ENCODE measurements at regions of chr14 and their contacts with region 1.

Region 1: GRCh38 chr14:75906676-75907280 is 75.0 kb downstream of the TGFB3 start:
- DNase-seq: peak; percentile 66
- H3K4me3 ChIP-seq: no peak overlapping the region
- H3K27ac ChIP-seq: no peak overlapping the region
- H3K4me1 ChIP-seq: peaks cover 3% of the 10 kb centered on the region
- H3K27me3 ChIP-seq: no peaks in the 10 kb centered on the region
- CTCF ChIP-seq: peak; percentile 67 to 73
- POLR2A ChIP-seq: no peak

Region 2: DNA sequence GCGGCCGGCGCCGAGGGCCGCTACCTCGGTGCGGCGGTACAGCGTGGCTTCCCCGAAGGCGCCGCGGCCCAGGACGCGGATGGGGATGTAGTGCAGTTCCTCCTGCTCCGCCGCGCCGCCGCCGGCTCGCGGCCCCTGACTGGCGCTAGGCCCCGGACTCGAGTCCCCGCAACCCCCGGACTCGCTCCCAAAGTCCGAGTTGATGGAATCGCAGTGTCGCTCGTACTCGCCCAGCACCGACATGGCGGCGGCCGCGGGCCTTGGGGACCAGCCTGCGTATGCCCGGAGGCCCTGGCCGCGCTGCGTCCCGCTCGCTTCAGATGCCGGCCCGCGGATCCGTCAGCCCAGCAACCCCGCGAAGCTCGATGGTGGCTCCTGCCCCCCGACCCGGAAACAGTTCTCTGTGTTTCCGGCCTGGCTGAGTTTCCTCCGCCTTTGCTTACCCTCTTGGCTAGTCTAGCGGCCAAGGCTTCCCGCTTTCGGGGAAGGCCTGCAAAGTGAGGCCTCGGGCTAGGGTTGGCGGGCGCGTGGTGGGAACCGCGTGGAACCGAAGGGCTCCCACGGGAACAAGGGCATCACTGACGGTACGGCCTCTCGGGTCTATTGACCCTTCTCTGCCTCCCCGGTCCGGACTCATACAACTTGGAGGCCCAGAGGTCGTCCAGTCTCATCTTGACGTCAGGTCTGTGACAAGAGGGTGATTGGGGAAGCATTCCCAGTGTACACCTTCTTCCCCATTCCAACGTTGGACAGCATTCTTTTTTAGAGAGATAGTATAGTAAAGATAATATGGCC is 779.9 kb before region 1 on chr14 and contains the start of gene NEK9:
- CTCF ChIA-PET with region 1: no interaction called
- POLR2A ChIA-PET with region 1: no interaction called
- dilution Hi-C with region 1: no loop called
- intact Hi-C with region 1: no loop called
- DNase-seq: peak; percentile 89
- H3K4me3 ChIP-seq: peak within 1 kb of the TSS; percentile 36 to 69 (median 62)
- H3K27ac ChIP-seq: peak within 1 kb of the TSS; percentile 95
- H3K4me1 ChIP-seq: peaks cover 45% of the 10 kb centered on the region
- H3K27me3 ChIP-seq: no peaks in the 10 kb centered on the region
- CTCF ChIP-seq: no peak
- POLR2A ChIP-seq: peak; percentile 93
- total RNA-seq, gene NEK9: 65.1 and 69.6 TPM in 2 replicates

Region 3: DNA sequence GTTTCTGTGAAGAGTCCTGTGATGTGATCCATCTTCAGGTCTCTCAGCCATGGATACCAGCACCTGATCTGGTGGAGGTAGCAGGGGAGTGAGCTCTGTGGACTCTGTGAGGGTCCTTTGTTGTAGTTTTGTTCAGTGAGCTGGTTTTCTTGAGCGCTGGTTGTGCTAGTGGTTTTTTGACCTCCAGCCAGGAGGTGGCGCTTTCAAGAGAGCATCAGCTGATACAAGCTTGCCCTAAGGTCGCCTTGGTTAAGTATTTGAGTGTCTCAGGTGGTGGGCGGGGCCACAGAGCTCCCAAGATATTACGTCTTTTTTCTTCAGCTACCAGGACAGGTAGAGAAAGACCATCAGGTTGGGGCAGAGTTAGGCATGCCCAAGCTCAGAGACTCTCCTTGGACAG is 106.0 kb before region 1 on chr14:
- CTCF ChIA-PET with region 1: interaction called, 52 read pairs
- POLR2A ChIA-PET with region 1: no interaction called
- dilution Hi-C with region 1: no loop called
- intact Hi-C with region 1: no loop called
- DNase-seq: no peak
- H3K4me3 ChIP-seq: no peak overlapping the region
- H3K27ac ChIP-seq: no peak overlapping the region
- H3K4me1 ChIP-seq: no peaks in the 10 kb centered on the region
- H3K27me3 ChIP-seq: no peaks in the 10 kb centered on the region
- CTCF ChIP-seq: no peak
- POLR2A ChIP-seq: no peak

Region 4: DNA sequence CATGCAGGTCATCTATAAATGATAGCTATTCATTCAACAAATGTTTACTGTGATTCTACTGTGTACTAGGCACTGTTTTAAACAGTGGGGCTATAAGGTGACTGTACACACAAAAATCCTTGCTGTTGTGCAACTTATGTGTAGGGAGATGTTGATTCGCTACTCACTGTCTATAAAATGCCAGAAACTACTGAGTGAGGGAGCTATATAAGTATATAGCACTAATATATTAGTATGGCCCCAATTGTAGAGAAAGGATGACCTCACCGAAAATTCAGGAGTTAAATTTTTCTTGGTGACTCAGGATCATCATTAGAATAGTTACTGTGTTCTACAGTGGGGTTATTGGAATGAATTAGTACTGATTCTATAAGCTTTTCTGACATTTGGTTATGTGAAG is 42.4 kb before region 1 on chr14:
- CTCF ChIA-PET with region 1: interaction called, 52 read pairs
- POLR2A ChIA-PET with region 1: no interaction called
- dilution Hi-C with region 1: no loop called
- intact Hi-C with region 1: no loop called
- DNase-seq: no peak
- H3K4me3 ChIP-seq: no peak overlapping the region
- H3K27ac ChIP-seq: no peak overlapping the region
- H3K4me1 ChIP-seq: peaks cover 32% of the 10 kb centered on the region
- H3K27me3 ChIP-seq: no peaks in the 10 kb centered on the region
- CTCF ChIP-seq: no peak
- POLR2A ChIP-seq: no peak

Region 5: DNA sequence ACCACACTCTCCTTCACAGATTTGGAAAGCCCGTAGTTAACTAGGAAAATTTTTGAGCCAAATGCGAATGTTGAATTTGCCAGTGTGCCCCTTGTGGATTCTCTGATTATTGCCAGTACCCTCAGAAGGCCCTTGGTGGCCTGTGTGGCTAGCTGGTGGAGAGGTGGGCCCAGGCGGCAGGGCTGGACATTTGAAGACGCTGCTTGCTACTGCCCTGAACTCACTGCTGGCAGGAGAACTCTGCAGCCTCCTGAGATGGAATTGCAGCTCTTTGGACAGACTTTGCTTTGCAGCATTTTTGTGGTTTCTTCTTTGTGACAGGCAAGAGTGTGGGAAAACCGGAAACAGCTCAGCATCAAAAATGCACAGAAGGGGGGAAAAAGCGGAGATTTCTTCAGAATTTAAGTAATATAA is 22.6 kb before region 1 on chr14:
- CTCF ChIA-PET with region 1: interaction called, 23 read pairs
- POLR2A ChIA-PET with region 1: no interaction called
- dilution Hi-C with region 1: no loop called
- intact Hi-C with region 1: no loop called
- DNase-seq: no peak
- H3K4me3 ChIP-seq: no peak overlapping the region
- H3K27ac ChIP-seq: no peak overlapping the region
- H3K4me1 ChIP-seq: peaks cover 10% of the 10 kb centered on the region
- H3K27me3 ChIP-seq: no peaks in the 10 kb centered on the region
- CTCF ChIP-seq: peak; percentile 27 to 48
- POLR2A ChIP-seq: no peak

Region 6: DNA sequence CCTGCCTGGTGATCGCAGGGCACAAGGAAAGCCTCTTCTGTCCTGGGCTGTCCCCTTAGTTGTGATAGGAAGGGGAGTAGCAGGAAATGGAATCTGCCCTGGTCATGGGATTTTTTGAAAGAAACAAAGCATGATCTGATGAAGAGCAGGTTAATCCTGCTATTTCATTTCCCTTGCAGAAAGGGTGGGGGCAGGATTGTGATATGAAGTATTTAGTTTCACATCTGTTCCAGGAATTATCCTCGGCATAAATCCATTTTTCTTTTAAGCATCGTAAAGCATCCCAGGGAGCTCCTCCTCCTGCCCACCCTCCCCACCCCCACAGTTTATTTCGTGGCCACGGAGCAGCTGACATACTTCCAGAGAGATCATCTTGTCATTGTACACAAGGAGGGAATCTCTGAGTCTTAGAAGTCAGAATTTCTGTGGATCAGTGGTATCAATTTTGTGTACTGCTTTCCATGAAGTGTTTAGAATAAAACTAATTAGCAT is 22.0 kb after region 1 on chr14:
- CTCF ChIA-PET with region 1: interaction called, 17 read pairs
- POLR2A ChIA-PET with region 1: no interaction called
- dilution Hi-C with region 1: no loop called
- intact Hi-C with region 1: no loop called
- DNase-seq: peak; percentile 27
- H3K4me3 ChIP-seq: no peak overlapping the region
- H3K27ac ChIP-seq: no peak overlapping the region
- H3K4me1 ChIP-seq: peaks cover 3% of the 10 kb centered on the region
- H3K27me3 ChIP-seq: no peaks in the 10 kb centered on the region
- CTCF ChIP-seq: no peak
- POLR2A ChIP-seq: no peak

Region 7: DNA sequence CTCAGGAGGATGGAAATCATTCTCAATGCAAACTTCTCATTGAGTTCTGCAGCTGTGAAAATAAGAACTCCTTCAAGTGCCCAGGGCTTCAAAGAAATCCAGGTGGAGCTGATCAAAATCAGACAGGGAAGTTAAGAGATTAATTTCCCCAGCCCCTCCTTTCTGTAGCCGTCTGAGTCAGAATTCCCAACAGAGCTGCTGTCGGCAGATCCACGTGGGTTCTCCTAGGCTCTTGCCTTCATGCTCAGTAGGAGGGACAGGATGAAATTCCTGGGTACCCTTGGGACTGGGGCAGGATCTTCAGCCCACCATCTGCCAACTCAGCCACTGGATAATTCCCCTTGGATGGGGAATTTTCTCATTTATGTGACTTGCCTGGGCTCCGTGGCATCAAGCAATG is 61.7 kb after region 1 on chr14:
- CTCF ChIA-PET with region 1: interaction called, 31 read pairs
- POLR2A ChIA-PET with region 1: no interaction called
- dilution Hi-C with region 1: no loop called
- intact Hi-C with region 1: no loop called
- DNase-seq: no peak
- H3K4me3 ChIP-seq: no peak overlapping the region
- H3K27ac ChIP-seq: no peak overlapping the region
- H3K4me1 ChIP-seq: no peaks in the 10 kb centered on the region
- H3K27me3 ChIP-seq: no peaks in the 10 kb centered on the region
- CTCF ChIP-seq: no peak
- POLR2A ChIP-seq: no peak

Region 8: GRCh38 chr14:76168531-76168930 is 261.8 kb after region 1 on chr14:
- CTCF ChIA-PET with region 1: no interaction called
- POLR2A ChIA-PET with region 1: no interaction called
- dilution Hi-C with region 1: no loop called
- intact Hi-C with region 1: no loop called
- DNase-seq: no peak
- H3K4me3 ChIP-seq: no peak overlapping the region
- H3K27ac ChIP-seq: no peak overlapping the region
- H3K4me1 ChIP-seq: no peaks in the 10 kb centered on the region
- H3K27me3 ChIP-seq: no peaks in the 10 kb centered on the region
- CTCF ChIP-seq: no peak
- POLR2A ChIP-seq: no peak

Region 9: GRCh38 chr14:76386915-76387782 is 480.4 kb after region 1 on chr14:
- CTCF ChIA-PET with region 1: interaction called, 5 read pairs
- POLR2A ChIA-PET with region 1: no interaction called
- dilution Hi-C with region 1: no loop called
- intact Hi-C with region 1: loop called (anchors 10 kb)
- DNase-seq: peak; percentile 63
- H3K4me3 ChIP-seq: no peak overlapping the region
- H3K27ac ChIP-seq: no peak overlapping the region
- H3K4me1 ChIP-seq: no peaks in the 10 kb centered on the region
- H3K27me3 ChIP-seq: peaks cover 21 to 39% of the 10 kb centered on the region in 2 experiments
- CTCF ChIP-seq: peak; percentile 98
- POLR2A ChIP-seq: no peak